ENCODE measurements at regions of chr3 and their contacts with region 1.

Region 1: GRCh38 chr3:194134757-194135528 is 1.0 kb upstream of the HES1 start:
- DNase-seq: peak; percentile 96
- H3K4me3 ChIP-seq: peak overlapping the region; percentile 47 to 75 (median 66)
- H3K27ac ChIP-seq: peak overlapping the region; percentile 80 to 95 (median 92)
- H3K4me1 ChIP-seq: peaks cover 30 to 97% (median 91%) of the 10 kb centered on the region in 6 donors
- H3K27me3 ChIP-seq: peaks cover 0 to 91% (median 3%) of the 10 kb centered on the region in 7 donors
- CTCF ChIP-seq: no peak
- POLR2A ChIP-seq: peak in 1 of 3 donors; percentile 44

Region 2: DNA sequence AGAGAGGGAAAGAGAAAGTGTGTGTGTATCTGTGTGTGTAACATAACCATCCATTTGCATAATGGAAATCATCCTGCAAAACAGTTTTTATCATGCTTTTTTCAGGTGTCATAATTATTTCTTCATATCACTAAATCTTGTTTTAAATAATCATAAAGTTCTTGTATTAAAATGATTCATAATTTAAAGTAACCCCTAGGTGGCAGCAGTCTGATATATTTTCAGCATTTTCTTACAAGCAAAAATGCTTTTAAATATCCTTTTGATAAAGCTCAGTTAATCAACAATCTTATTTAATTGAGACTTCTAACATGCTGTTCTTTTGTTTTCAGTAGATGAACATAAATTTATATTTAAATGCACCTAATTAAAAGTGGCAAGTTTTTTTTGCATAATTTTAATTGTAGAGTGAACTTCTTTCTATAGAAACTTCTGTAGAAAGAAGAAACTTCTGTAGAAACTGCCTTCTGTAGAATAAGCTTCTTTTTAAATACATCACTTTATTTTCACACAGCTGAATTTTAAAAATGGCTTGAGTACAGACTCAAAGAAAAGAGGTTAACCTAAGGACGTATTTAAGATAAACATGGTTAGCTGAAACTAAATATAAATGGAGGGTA is 469.5 kb before region 1 on chr3:
- intact Hi-C with region 1: loop called (anchors 10 kb)
- DNase-seq: no peak
- H3K4me3 ChIP-seq: no peak overlapping the region
- H3K27ac ChIP-seq: no peak overlapping the region
- H3K4me1 ChIP-seq: no peaks in the 10 kb centered on the region
- H3K27me3 ChIP-seq: no peaks in the 10 kb centered on the region
- CTCF ChIP-seq: peak in 10 of 11 experiments; percentile 11 to 53 (median 34)
- POLR2A ChIP-seq: no peak

Region 3: GRCh38 chr3:193780810-193781472 is 354.0 kb before region 1 on chr3:
- intact Hi-C with region 1: loop called (anchors 5 kb)
- DNase-seq: peak; percentile 81
- H3K4me3 ChIP-seq: no peak overlapping the region
- H3K27ac ChIP-seq: peak overlapping the region in 4 of 8 donors; percentile 34 to 51 (median 37)
- H3K4me1 ChIP-seq: peaks cover 0 to 38% (median 23%) of the 10 kb centered on the region in 6 donors
- H3K27me3 ChIP-seq: peaks cover 0 to 49% (median 0%) of the 10 kb centered on the region in 7 donors
- CTCF ChIP-seq: peak in 10 of 11 experiments; percentile 29 to 79 (median 68)
- POLR2A ChIP-seq: no peak

Region 4: GRCh38 chr3:194003125-194004057 is 131.6 kb before region 1 on chr3:
- intact Hi-C with region 1: no loop called
- DNase-seq: peak; percentile 92
- H3K4me3 ChIP-seq: peak overlapping the region in 7 of 8 donors; percentile 6 to 66 (median 32)
- H3K27ac ChIP-seq: peak overlapping the region in 7 of 8 donors; percentile 47 to 82 (median 73)
- H3K4me1 ChIP-seq: peaks cover 27 to 59% (median 43%) of the 10 kb centered on the region in 6 donors
- H3K27me3 ChIP-seq: peaks cover 0 to 27% (median 0%) of the 10 kb centered on the region in 7 donors
- CTCF ChIP-seq: no peak
- POLR2A ChIP-seq: no peak

Measured in spleen (tissue), 13 donors.